MCF 10A (cell line): ENCODE measurements at regions of chr3 and their contacts with region 1.

Region 1: GRCh38 chr3:168040607-168041208 is 55.0 kb downstream of the GOLIM4 start:
- DNase-seq: peak; percentile 70
- H3K4me3 Mint-ChIP-seq: no peak overlapping the region
- H3K27ac Mint-ChIP-seq: no peak overlapping the region
- H3K4me1 Mint-ChIP-seq: no peaks in the 10 kb centered on the region
- H3K27me3 Mint-ChIP-seq: no peaks in the 10 kb centered on the region
- CTCF ChIP-seq: peak; percentile 45

Region 2: DNA sequence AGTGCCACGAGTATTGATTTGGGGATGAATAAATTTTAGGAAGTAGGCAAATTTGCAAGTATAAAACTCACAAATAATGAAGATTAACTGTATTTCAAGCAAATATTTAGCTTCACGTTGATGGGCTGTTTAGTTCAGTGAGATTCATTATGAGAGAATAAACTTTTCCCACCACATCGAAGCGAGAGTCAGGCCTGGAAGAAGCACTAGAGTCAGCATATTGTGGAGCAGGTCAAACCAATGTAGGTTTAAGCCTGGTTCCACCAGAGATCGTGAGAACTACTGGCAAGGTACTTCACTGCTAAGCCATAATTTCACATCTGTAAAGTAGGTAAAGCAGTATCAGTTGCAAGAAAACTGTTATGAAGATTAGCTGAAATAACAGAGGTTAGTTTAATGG is 409.2 kb before region 1 on chr3:
- CTCF ChIA-PET with region 1: no interaction called
- POLR2A ChIA-PET with region 1: no interaction called
- intact Hi-C with region 1: no loop called
- DNase-seq: no peak
- H3K4me3 Mint-ChIP-seq: no peak overlapping the region
- H3K27ac Mint-ChIP-seq: no peak overlapping the region
- H3K4me1 Mint-ChIP-seq: no peaks in the 10 kb centered on the region
- H3K27me3 Mint-ChIP-seq: peaks cover 11% of the 10 kb centered on the region
- CTCF ChIP-seq: no peak

Region 3: GRCh38 chr3:167837466-167837865 is 203.2 kb before region 1 on chr3:
- CTCF ChIA-PET with region 1: interaction called, 26 read pairs
- POLR2A ChIA-PET with region 1: interaction called, 5 read pairs
- intact Hi-C with region 1: loop called (anchors 1 kb)
- DNase-seq: peak; percentile 25
- H3K4me3 Mint-ChIP-seq: no peak overlapping the region
- H3K27ac Mint-ChIP-seq: no peak overlapping the region
- H3K4me1 Mint-ChIP-seq: no peaks in the 10 kb centered on the region
- H3K27me3 Mint-ChIP-seq: peaks cover 16% of the 10 kb centered on the region
- CTCF ChIP-seq: peak; percentile 18

Region 4: GRCh38 chr3:167929968-167930367 is 110.7 kb before region 1 on chr3:
- CTCF ChIA-PET with region 1: interaction called, 13 read pairs
- POLR2A ChIA-PET with region 1: interaction called, 3 read pairs
- intact Hi-C with region 1: loop called (anchors 1 kb)
- DNase-seq: no peak
- H3K4me3 Mint-ChIP-seq: no peak overlapping the region
- H3K27ac Mint-ChIP-seq: no peak overlapping the region
- H3K4me1 Mint-ChIP-seq: no peaks in the 10 kb centered on the region
- H3K27me3 Mint-ChIP-seq: no peaks in the 10 kb centered on the region
- CTCF ChIP-seq: no peak

Region 5: GRCh38 chr3:169026543-169027182 is 986.0 kb after region 1 on chr3:
- CTCF ChIA-PET with region 1: no interaction called
- POLR2A ChIA-PET with region 1: no interaction called
- intact Hi-C with region 1: no loop called
- DNase-seq: peak; percentile 96
- H3K4me3 Mint-ChIP-seq: peak overlapping the region; percentile 68
- H3K27ac Mint-ChIP-seq: peak overlapping the region; percentile 71
- H3K4me1 Mint-ChIP-seq: peaks cover 11% of the 10 kb centered on the region
- H3K27me3 Mint-ChIP-seq: no peaks in the 10 kb centered on the region
- CTCF ChIP-seq: no peak